AG04450 (cell line): ENCODE measurements at regions of chr19 and their contacts with region 1.

Region 1: DNA sequence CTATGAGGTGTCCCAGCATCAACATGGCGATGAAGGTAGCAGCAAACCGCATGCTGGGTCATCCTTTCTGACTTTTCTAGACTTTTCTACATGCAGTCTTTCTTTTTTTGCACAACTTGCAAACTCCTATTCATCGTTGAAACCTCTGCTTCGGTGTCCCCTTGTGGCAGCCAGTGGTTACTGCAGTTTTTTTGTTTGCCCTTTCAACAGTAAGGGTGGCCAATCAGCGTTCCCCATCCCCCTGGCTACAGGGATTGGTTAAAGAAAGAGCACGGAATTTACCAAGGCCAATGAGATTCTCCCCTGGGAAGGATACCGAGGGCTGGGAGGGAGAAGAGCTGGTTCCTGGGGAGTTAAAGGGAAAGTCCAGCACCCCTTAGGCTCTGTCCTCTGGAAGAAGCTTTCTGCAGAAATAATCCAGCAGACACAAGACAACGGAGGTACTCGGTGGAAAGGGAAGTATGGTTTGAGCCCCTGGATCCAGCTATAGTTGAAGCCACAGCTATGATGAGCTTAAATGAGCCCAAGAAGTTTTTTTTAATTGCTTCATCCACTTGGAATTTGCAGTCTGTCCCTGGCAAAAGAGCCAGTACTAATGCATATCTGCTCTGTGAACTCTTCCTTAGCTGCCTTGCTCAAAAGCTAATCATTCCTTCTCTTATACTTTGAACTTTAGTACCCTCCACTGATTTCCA is 5.6 kb upstream of the LSM4 start:
- DNase-seq: peak; percentile 95
- H3K4me3 ChIP-seq: peak overlapping the region; percentile 55
- H3K27ac ChIP-seq: peak overlapping the region; percentile 77
- H3K27me3 ChIP-seq: no peaks in the 10 kb centered on the region
- CTCF ChIP-seq: peak; percentile 96

Region 2: DNA sequence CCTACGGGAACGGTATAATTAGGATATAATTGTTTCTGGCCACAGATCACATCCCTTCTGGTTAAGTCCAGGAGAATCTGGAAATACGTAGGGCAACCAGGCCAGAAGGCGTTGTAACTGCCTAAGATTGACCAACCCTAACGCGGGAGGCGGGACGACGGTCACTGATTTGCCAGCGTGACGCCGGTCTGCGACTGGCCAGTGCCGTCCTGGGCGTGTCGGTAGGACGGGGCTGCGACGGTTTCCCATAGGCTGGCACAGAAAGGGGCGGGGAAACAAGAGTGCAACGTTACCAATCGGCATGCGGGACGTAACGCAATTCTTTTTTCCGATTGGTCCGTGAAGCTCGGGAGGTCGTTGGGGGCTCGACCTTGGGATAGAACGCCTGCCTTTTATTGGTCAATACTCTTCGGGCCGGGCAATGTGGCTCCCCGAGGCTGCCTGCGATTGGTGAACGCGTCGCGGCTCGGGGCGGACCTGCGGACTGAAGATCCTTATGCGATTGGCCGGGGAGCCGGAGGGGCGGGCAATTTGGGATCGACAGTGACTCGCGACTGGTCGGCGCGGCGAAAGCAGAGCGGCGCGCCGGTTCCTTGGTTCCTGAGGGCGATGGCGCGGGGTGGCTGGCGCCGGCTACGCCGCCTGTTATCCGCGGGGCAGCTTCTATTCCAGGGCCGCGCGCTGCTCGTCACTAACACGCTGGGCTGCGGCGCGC is 135.7 kb before region 1 on chr19 and contains the start of gene MPV17L2:
- CTCF ChIA-PET with region 1: interaction called, 10 read pairs
- POLR2A ChIA-PET with region 1: no interaction called
- DNase-seq: peak; percentile 100
- H3K4me3 ChIP-seq: peak within 1 kb of the TSS; percentile 84
- H3K27ac ChIP-seq: peak within 1 kb of the TSS; percentile 90
- H3K27me3 ChIP-seq: no peaks in the 10 kb centered on the region
- CTCF ChIP-seq: no peak
- polyA plus RNA-seq, gene MPV17L2: 8.2 and 13.4 TPM in 2 replicates

Region 3: GRCh38 chr19:18274781-18275356 is 53.6 kb before region 1 on chr19:
- CTCF ChIA-PET with region 1: interaction called, 122 read pairs
- POLR2A ChIA-PET with region 1: interaction called, 109 read pairs
- DNase-seq: no peak
- H3K4me3 ChIP-seq: peak overlapping the region; percentile 1; the same call in 1 of the 2 replicates
- H3K27ac ChIP-seq: peak overlapping the region; percentile 59
- H3K27me3 ChIP-seq: no peaks in the 10 kb centered on the region
- CTCF ChIP-seq: 0 out of 2 replicates have a peak, but pooled peaks have one; percentile 6

Region 4: DNA sequence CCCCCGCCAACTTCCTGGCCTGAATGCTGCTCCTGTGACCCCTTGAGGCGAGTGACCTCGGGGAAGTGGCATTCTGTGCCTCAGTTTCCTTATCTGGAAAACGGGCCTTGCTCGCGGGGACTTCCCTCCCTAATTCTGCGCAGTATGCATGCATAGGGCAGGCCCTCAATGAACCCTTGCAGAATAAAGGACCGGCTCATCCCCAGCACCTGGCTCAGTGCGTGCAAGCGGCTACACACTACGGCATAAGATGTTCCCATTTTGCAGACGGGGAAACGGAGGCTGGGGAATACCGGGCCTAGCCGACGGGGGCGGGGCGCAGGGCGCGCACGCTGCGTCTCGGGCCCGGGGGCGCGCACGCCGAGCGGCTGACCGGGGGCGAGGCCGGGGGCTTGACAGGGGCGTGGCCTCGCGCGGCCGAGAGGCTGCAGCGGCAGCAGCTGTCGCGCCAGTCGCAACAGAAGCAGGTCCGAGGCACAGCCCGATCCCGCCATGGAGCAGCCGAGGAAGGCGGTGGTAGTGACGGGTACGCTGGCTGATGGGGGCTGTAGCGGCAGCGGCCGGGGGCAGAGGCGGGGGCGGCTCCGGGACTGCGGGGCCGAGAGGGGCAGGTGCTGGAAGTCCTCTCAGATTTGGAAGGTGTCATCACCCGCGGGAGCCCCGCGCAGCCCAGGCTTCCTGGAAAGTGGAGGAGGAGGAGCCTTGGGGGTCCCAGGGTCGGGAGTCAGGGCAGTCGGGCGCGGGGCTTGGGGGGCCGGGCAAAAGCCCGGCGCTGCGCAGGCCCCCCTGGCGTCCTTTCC is 11.9 kb after region 1 on chr19 and contains the start of gene PGPEP1:
- CTCF ChIA-PET with region 1: interaction called, 35 read pairs
- POLR2A ChIA-PET with region 1: no interaction called
- DNase-seq: no peak
- H3K4me3 ChIP-seq: peak within 1 kb of the TSS; percentile 83
- H3K27ac ChIP-seq: no peak within 1 kb of the TSS
- H3K27me3 ChIP-seq: peaks cover 2% of the 10 kb centered on the region
- CTCF ChIP-seq: no peak
- polyA plus RNA-seq, gene PGPEP1: 22.0 and 29.1 TPM in 2 replicates

Region 5: GRCh38 chr19:18379803-18380747 is 51.6 kb after region 1 on chr19:
- CTCF ChIA-PET with region 1: interaction called, 13 read pairs
- POLR2A ChIA-PET with region 1: no interaction called
- DNase-seq: peak; percentile 84
- H3K4me3 ChIP-seq: no peak overlapping the region
- H3K27ac ChIP-seq: peak overlapping the region; percentile 49
- H3K27me3 ChIP-seq: no peaks in the 10 kb centered on the region
- CTCF ChIP-seq: no peak